CD4-positive, alpha-beta memory T cell (primary cell): ENCODE measurements at regions of chr19 and their contacts with region 1.

Region 1: DNA sequence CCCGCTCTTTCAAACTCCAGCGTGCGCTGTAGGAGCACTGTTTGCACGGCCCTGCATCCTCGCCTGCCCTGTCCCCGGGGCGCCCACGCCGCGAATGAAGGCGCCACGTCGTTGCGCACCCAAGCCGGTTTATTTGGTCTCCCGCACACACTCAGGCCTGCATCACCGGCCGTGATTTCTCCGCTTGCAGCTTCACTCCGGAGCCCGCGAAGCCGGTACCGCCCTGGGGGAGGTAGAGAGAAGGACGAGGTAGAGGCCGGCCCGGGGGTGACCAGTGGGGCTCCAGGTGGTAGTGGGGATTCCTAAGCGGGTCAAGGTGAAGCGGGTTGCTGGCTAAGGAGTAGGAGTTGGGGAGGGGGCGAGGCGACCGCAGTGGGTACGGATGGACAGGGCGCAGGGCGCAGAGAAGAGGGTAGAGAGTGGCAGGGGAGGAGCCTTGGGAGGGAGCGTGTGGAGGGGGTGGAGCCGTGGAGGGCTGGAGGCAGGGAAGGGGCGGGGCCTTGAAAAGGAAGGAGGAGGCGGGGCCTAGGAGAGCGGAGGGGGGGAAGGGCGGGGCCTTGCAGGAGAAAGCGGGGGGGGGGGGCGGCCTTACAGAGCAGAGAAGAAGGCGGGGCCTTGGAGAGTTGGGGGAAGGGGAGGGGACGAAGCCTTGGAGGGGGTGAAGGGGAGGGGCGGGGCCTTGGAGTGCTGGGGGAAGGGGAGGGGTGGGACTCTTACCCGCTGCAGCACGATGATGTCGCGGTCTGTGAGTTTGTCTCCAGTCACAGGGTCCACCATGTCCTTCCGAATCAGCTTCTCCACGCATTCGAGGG is 24.6 kb downstream of the NOSIP start:
- DNase-seq: peak; percentile 82 to 87 (median 86)
- H3K4me3 ChIP-seq: peak overlapping the region in 1 of 2 donors; percentile 19
- H3K4me3 Mint-ChIP-seq: peak overlapping the region; percentile 35 to 86 (median 78)
- H3K27ac ChIP-seq: no peak overlapping the region
- H3K27ac Mint-ChIP-seq: peak overlapping the region; percentile 89 to 99 (median 97)
- H3K4me1 ChIP-seq: peaks cover 97% of the 10 kb centered on the region
- H3K4me1 Mint-ChIP-seq: peaks cover 44 to 85% (median 63%) of the 10 kb centered on the region in 4 donors
- H3K27me3 ChIP-seq: no peaks in the 10 kb centered on the region
- H3K27me3 Mint-ChIP-seq: no peaks in the 10 kb centered on the region

Region 2: DNA sequence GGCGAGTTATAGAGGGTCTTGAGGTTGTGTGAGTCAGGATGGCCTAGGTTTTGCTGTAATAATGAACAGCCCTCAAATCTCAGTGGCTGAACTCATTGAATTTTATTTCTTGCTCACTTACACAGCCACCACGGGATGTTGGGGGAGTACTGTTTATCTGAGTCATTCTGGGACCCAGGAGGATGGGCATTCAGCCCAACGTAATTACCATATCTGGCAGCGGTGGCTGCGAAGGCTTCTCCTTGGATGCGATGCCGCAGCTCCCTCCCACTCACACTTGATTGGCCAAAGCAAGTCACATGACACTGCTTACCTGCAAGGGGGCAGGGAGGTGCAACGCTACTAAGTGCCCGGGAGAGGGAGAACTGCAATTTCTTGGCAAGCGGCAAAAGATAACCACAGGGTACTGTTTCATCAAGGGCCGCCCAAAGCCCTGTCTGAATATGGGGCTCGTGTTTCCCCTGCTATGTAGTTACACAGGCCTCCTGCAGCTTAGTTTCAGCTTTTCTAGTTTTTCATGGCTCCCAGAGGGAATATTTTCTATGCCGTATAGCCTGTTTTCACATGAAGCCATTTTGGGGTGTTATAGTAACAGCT is 1365.4 kb before region 1 on chr19:
- CTCF ChIA-PET with region 1: no interaction called
- POLR2A ChIA-PET with region 1: no interaction called
- intact Hi-C with region 1: no loop called
- DNase-seq: peak; percentile 36 to 77 (median 54)
- H3K4me3 ChIP-seq: no peak overlapping the region
- H3K4me3 Mint-ChIP-seq: no peak overlapping the region
- H3K27ac ChIP-seq: no peak overlapping the region
- H3K27ac Mint-ChIP-seq: peak overlapping the region in 3 of 7 donors; percentile 3 to 63 (median 29)
- H3K4me1 ChIP-seq: no peaks in the 10 kb centered on the region
- H3K4me1 Mint-ChIP-seq: peaks cover 2 to 21% (median 4%) of the 10 kb centered on the region in 4 donors
- H3K27me3 ChIP-seq: no peaks in the 10 kb centered on the region
- H3K27me3 Mint-ChIP-seq: no peaks in the 10 kb centered on the region

Region 3: DNA sequence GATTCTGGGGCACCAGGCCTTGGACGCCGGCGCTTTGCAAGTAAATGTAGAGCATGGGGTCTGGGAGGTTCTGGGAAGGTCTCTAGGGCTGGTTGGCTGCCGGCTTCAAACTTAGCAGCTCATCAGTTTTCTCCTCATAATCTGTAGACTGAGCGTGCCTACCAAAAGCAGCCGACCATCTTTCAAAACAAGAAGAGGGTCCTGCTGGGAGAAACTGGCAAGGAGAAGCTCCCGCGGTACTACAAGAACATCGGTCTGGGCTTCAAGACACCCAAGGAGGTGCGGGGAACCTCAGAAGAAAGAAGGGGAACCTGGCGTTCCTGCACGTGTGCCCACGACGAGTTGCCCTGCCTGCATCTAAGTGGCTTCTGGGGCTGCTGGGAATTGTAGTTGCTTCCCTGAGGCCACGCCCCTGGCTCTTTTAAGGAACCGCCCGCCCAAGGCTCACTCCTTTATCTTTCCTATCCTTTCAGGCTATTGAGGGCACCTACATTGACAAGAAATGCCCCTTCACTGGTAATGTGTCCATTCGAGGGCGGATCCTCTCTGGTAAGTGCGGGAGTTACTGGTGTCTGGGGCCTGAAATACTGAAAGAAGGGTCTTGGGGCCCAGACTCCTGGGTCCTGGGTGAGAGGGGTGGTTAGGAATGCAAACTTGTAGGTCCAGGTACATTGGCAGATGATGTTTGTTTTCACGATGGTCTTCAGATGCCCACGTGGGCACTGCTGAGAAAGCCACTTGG is 58.6 kb before region 1 on chr19:
- CTCF ChIA-PET with region 1: interaction called, 9 read pairs
- POLR2A ChIA-PET with region 1: interaction called, 24 read pairs
- intact Hi-C with region 1: no loop called
- DNase-seq: peak; percentile 79 to 89 (median 83)
- H3K4me3 ChIP-seq: peak overlapping the region; percentile 92 to 99
- H3K4me3 Mint-ChIP-seq: peak overlapping the region; percentile 99 to 100 (median 100)
- H3K27ac ChIP-seq: peak overlapping the region; percentile 95
- H3K27ac Mint-ChIP-seq: peak overlapping the region; percentile 95 to 100 (median 99)
- H3K4me1 ChIP-seq: peaks cover 55% of the 10 kb centered on the region
- H3K4me1 Mint-ChIP-seq: peaks cover 23 to 87% (median 43%) of the 10 kb centered on the region in 4 donors
- H3K27me3 ChIP-seq: no peaks in the 10 kb centered on the region
- H3K27me3 Mint-ChIP-seq: no peaks in the 10 kb centered on the region

Region 4: DNA sequence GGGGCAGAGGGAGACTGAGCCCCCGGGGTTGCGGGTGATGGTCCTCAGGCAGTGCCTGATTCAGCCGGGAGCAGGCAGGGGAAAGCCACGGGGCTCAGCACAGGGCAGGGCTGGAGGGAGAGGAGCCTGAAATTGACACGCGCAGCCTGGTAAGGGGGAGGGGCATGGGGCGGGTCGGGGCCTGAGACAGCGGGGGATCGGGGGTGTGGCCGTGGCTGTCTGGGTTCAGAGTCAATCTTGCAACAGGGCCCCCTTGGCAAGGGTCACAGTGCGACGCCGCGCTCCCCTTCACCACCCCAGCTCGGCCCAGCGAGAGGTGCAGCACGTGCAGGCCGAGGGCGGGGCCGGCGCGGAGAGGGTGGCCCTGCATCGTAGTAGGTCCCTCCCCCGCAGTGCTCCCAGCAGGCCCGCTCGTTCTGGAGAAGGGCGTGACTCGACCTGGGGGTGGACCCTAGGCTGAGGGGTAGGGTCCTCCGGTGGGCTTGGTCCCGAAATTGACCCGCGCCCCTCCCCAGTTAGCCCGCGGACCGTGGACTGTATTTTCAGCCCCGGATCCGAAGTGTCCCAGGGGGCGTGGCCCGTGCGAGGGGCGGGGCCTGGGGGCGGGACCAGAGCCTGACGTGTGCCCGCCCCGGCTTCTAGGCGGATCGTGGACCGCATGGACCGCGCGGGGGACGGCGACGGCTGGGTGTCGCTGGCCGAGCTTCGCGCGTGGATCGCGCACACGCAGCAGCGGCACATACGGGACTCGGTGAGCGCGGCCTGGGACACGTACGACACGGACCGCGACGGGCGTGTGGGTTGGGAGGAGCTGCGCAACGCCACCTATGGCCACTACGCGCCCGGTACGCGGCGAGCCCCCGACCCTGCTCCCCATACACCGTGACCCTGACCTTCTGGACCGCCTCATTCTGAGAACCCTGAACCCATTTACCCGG is 22.0 kb before region 1 on chr19:
- CTCF ChIA-PET with region 1: interaction called, 11 read pairs
- POLR2A ChIA-PET with region 1: interaction called, 27 read pairs
- intact Hi-C with region 1: no loop called
- DNase-seq: peak; percentile 84 to 91 (median 87)
- H3K4me3 ChIP-seq: peak overlapping the region; percentile 61 to 70
- H3K4me3 Mint-ChIP-seq: peak overlapping the region; percentile 78 to 90 (median 88)
- H3K27ac ChIP-seq: peak overlapping the region; percentile 50
- H3K27ac Mint-ChIP-seq: peak overlapping the region; percentile 17 to 92 (median 83)
- H3K4me1 ChIP-seq: peaks cover 23% of the 10 kb centered on the region
- H3K4me1 Mint-ChIP-seq: peaks cover 16 to 35% (median 22%) of the 10 kb centered on the region in 4 donors
- H3K27me3 ChIP-seq: no peaks in the 10 kb centered on the region
- H3K27me3 Mint-ChIP-seq: no peaks in the 10 kb centered on the region

Region 5: DNA sequence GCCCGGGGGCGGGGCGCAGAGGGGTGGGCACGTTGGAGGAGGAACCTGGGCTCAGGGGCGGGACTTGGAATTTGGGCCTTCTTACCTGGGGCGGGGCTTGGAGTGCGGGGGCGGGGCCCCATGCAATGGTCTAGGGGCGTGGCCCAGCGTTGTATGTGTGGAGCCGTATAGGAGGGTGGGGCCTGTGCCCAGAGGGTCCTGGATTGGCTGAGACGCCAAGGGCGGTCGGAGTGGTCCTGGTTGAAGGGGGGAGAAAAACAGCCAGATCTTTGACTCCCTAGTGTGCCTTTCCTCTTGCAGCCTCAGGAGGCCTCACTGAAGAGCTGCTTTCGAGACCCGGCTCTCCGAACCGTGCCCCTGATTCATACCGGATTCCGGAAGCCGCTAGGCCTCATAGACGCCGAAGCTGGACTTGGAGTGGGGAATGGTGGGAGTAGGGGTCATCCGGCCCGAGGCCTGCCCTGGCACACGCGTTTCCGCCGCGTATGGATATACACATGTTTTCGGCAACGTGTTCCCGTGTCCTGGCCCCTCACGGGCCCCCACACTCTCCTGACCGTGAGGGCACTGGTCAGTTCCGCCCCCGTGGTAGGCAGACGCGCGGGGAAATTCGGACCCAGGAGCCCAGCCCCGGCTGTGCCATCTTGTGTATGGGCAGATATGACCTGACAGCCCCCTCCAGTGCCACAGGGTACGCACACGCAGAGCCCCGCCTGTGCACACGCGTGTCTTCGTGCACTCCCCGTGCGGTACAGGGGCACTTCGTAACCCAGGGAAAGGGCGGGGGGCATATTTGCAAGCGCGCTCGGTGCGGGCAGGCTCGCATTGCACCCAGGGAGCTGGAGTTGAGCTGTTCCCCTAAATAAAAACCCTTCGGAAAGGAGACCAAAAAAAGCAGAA is 34.5 kb after region 1 on chr19:
- CTCF ChIA-PET with region 1: no interaction called
- POLR2A ChIA-PET with region 1: interaction called, 12 read pairs
- intact Hi-C with region 1: no loop called
- DNase-seq: peak; percentile 94 to 96 (median 95)
- H3K4me3 ChIP-seq: peak overlapping the region; percentile 68 to 95
- H3K4me3 Mint-ChIP-seq: peak overlapping the region; percentile 81 to 95 (median 93)
- H3K27ac ChIP-seq: peak overlapping the region; percentile 74
- H3K27ac Mint-ChIP-seq: peak overlapping the region; percentile 84 to 97 (median 94)
- H3K4me1 ChIP-seq: peaks cover 23% of the 10 kb centered on the region
- H3K4me1 Mint-ChIP-seq: peaks cover 21 to 48% (median 31%) of the 10 kb centered on the region in 4 donors
- H3K27me3 ChIP-seq: no peaks in the 10 kb centered on the region
- H3K27me3 Mint-ChIP-seq: no peaks in the 10 kb centered on the region

Region 6: DNA sequence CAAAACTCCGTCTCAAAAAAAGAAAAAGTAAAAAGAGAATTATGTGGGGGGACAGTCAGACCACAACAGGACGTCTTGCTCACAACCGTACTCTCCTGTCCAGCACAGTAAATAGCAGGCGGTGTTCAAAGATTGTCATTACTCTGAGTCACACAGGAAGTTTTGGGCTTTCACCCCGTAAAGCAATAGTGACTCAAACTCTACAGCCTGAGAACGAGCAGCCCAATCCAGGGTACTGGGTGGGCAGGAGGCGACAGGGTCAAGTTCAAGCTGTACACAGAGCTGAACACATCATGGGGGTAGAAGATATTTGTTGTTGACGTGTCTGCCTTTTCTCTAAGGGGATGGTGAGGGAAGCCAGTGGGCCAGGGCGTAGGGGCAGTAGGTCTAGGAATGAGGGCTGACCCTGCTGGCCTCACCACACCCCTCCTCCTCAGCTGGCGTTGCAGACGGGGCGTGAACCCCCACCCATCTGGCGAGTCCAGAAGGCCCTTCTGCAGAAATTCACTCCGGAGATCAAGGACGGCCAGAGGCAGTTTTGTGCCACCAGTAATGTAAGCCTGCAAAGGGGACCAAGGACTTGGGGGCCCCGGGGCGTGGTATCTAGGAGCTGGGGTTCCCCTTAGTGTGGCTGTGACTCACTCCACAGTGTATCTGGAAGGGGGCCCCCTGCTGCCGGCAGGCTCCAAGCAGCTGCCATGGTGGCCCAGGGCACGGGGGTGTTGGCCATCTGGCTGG is 58.5 kb after region 1 on chr19:
- CTCF ChIA-PET with region 1: no interaction called
- POLR2A ChIA-PET with region 1: no interaction called
- intact Hi-C with region 1: no loop called
- DNase-seq: no peak
- H3K4me3 ChIP-seq: no peak overlapping the region
- H3K4me3 Mint-ChIP-seq: peak overlapping the region in 1 of 8 donors; percentile 33
- H3K27ac ChIP-seq: no peak overlapping the region
- H3K27ac Mint-ChIP-seq: peak overlapping the region; percentile 13 to 91 (median 70)
- H3K4me1 ChIP-seq: peaks cover 5% of the 10 kb centered on the region
- H3K4me1 Mint-ChIP-seq: peaks cover 3 to 17% (median 11%) of the 10 kb centered on the region in 4 donors
- H3K27me3 ChIP-seq: no peaks in the 10 kb centered on the region
- H3K27me3 Mint-ChIP-seq: no peaks in the 10 kb centered on the region